ENCODE measurements at regions of chr6 and their contacts with region 1.

Region 1: GRCh38 chr6:32127717-32128592 is at the start of gene ATF6B:
- DNase-seq: peak; percentile 97
- ATAC-seq: peak; percentile 95
- H3K4me3 ChIP-seq: peak within 1 kb of the TSS; percentile 88
- H3K27ac ChIP-seq: peak within 1 kb of the TSS; percentile 95
- H3K4me1 ChIP-seq: peaks cover 13% of the 10 kb centered on the region
- H3K27me3 ChIP-seq: no peaks in the 10 kb centered on the region
- CTCF ChIP-seq: no peak
- EP300 ChIP-seq: no peak
- POLR2A ChIP-seq: peak; percentile 91
- RAD21 ChIP-seq: no peak
- polyA plus RNA-seq, gene ATF6B: 13.6 to 16.0 TPM

Region 2: GRCh38 chr6:32081168-32081990 is 46.6 kb before region 1 on chr6:
- CTCF ChIA-PET with region 1: no interaction called
- POLR2A ChIA-PET with region 1: no interaction called
- RAD21 ChIA-PET with region 1: no interaction called
- SMC1A ChIA-PET with region 1: no interaction called
- in situ Hi-C with region 1: no loop called
- intact Hi-C with region 1: no loop called
- DNase-seq: no peak
- ATAC-seq: no peak
- H3K4me3 ChIP-seq: no peak overlapping the region
- H3K27ac ChIP-seq: no peak overlapping the region
- H3K4me1 ChIP-seq: peaks cover 6% of the 10 kb centered on the region
- H3K27me3 ChIP-seq: peaks cover 3 to 8% of the 10 kb centered on the region in 2 experiments; a peak in 3 of 4 replicates
- CTCF ChIP-seq: no peak
- EP300 ChIP-seq: no peak
- POLR2A ChIP-seq: no peak
- RAD21 ChIP-seq: no peak

Region 3: DNA sequence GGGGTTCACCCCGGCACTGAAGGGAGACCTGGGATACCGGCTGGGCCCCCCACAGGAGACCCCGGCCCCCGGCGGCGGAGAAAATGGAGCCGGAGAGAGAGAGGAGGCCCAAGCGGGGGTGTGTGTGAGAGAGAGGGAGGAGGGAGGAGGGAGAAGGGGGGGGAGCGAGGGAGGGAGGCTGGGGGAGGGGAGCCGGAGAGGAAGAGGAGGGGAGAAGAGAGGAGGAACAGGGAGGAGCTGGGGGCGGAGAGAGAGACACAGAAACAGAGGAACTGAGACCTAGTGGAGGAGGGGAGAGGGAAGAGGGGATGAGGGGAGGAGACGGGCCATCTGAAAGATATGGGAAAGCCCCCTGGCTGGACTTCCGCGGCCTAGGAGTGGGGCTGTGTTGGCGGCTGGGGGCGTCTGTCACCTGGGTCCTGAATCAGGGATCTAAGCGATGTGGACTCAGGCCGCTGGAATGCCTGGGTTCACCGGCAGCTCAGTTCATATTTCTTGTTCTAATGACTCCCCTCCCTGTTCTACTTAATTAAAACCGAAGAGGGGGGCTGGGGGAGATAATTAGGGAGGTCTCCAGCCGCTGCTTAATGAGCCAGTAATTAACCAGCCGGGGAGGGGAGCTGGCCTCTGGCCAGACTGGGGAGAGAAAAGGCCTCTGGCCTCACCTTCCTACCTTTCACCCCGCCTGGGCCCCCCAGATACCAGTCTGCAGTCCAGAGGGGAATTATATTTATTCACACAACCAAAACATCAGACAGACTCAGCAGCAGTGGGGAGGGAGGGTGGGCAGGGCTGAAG is 62.3 kb after region 1 on chr6 and contains the start of gene PBX2:
- CTCF ChIA-PET with region 1: interaction called, 35 read pairs
- POLR2A ChIA-PET with region 1: interaction called, 69 read pairs
- RAD21 ChIA-PET with region 1: interaction called, 27 read pairs
- SMC1A ChIA-PET with region 1: interaction called, 24 read pairs
- in situ Hi-C with region 1: no loop called
- intact Hi-C with region 1: loop called (anchors 1 kb)
- DNase-seq: peak; percentile 91
- ATAC-seq: peak; percentile 79
- H3K4me3 ChIP-seq: peak within 1 kb of the TSS; percentile 90
- H3K27ac ChIP-seq: peak within 1 kb of the TSS; percentile 100
- H3K4me1 ChIP-seq: peaks cover 39% of the 10 kb centered on the region
- H3K27me3 ChIP-seq: no peaks in the 10 kb centered on the region
- CTCF ChIP-seq: 0 out of 6 replicates have a peak, but pooled peaks of 1 of the 3 experiments have one; percentile 2
- EP300 ChIP-seq: peak; percentile 22 to 27; a peak in 2 of 4 replicates
- POLR2A ChIP-seq: peak; percentile 70
- RAD21 ChIP-seq: no peak
- polyA plus RNA-seq, gene PBX2: 0.84 to 1.2 TPM